B cell (primary cell): ENCODE measurements at regions of chr15 and their contacts with region 1.

Region 1: DNA sequence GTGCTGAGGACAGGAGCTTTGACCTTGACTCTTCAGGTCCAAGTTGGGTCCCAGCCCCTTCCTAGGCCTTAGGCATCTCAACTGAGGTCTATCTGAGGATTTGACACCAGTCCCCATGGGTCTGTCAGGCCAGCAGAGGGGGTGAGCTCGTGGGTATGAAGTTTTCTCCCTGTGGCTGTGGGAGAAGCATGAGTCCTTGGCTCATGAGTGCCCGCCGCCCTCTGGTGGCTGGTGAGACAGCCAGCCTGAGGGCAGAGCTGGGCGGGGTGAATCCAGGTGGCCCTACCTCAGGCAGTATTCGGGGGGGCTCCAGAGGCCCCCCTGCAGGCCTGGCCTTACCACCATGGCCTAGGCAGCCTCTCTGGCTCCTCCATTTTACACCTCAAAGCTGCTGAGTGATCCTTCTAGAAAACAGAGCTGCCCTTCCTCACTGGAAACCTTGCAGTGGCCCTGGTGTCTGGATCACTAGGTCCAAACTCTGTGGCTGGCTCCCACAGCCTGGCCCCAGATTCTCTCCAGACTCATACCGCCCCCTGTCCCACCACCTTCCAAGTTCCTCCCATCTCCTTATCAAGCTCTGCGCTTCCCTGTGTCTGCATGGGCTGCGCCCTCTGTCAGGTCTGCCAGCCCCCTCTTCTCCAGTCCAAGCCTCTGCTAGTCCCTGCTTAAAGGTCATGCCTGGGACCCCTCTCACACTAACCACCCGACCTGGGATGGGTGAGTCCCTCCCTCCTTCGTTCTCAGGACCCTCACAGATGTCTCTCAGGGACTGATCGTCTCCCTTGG is 16.1 kb downstream of the SH2D7 start:
- DNase-seq: peak; percentile 87
- ATAC-seq: peak; percentile 92
- H3K4me3 ChIP-seq: no peak overlapping the region
- H3K4me3 Mint-ChIP-seq: no peak overlapping the region
- H3K27ac ChIP-seq: no peak overlapping the region
- H3K27ac Mint-ChIP-seq: no peak overlapping the region
- H3K4me1 ChIP-seq: peaks cover 4 to 8% of the 10 kb centered on the region in 2 donors
- H3K4me1 Mint-ChIP-seq: peaks cover 4% of the 10 kb centered on the region
- H3K27me3 ChIP-seq: no peaks in the 10 kb centered on the region
- H3K27me3 Mint-ChIP-seq: no peaks in the 10 kb centered on the region
- CTCF ChIP-seq: peak; percentile 87

Region 2: DNA sequence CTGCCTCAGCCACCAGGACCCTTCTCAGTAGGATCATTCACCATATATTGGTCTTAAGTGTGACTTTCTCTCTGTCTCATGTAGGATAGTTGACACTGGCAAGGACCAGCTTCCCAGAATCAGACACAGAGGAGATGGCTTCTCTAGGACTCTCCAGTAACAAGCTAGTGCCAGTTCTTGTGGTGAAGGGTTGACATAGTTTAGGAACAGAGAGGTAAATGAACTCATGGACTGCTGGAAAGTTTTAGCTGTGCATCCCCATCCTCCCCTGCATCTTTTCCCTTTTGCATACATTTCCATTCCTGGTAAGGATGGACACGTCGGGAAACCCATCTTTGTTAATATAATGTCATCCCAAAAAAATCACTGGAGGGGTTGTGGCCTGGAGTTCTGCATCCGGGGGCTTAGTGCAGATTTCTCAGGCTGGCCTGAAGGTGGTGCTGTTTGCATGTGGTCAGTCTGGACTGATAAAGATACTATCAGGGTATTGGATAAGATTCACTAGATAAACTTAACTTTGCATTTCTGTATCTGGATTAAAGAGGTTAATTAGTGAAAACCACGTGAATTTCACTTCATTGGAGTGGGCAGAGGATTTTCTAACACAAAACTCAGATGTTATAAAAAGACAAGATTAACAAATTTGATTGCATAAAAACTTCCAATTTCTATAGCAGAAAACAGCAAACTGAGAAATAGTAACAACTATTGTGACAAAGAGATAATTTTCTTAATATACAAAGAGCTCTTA is 141.8 kb before region 1 on chr15:
- CTCF ChIA-PET with region 1: interaction called, 236 read pairs
- POLR2A ChIA-PET with region 1: no interaction called
- intact Hi-C with region 1: loop called (anchors 1 kb)
- DNase-seq: peak; percentile 62
- ATAC-seq: peak; percentile 68
- H3K4me3 ChIP-seq: no peak overlapping the region
- H3K4me3 Mint-ChIP-seq: no peak overlapping the region
- H3K27ac ChIP-seq: no peak overlapping the region
- H3K27ac Mint-ChIP-seq: no peak overlapping the region
- H3K4me1 ChIP-seq: no peaks in the 10 kb centered on the region
- H3K4me1 Mint-ChIP-seq: peaks cover 4% of the 10 kb centered on the region
- H3K27me3 ChIP-seq: no peaks in the 10 kb centered on the region
- H3K27me3 Mint-ChIP-seq: peaks cover 6% of the 10 kb centered on the region
- CTCF ChIP-seq: peak; percentile 84

Region 3: DNA sequence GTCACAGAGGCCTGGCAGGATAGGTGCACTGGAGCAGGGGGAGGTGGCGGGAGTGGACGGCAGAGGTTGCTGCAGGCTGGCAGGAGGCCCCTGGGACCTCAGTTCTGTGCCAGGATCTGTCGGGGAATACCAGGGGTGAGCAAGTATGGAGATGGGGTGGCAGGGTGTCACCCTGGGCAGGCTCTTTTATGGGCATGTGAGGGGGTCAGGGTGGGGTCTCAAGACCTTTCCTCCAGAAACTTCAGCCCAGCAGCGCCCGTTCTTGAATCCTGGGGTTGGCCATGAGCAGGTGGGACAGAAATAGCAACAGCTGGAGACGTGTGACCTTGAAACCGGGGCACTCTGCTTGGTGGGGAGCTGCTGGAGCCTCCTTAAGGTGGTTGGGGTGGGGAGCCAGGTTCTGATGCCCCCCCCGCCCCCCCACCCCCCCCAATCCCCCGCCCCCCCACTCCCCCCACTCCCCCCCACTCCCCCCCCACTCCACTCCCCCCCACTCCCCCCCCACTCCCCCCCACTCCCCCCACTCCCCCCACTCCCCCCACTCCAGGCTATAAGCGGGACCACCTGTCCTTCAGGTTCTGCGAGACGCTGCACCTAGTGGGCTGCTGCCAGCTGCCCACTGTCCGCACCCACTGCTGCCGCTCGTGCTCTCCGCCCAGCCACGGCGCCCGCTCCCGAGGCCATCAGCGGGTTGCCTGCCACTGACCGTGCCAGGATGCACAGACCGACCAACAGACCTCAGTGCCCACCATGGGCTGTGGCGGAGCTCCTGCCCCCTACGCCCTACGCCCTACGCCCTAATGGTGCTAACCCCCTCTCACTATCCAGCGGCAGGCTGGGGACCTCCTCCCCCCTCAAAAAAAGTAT is 115.9 kb before region 1 on chr15:
- CTCF ChIA-PET with region 1: interaction called, 99 read pairs
- POLR2A ChIA-PET with region 1: no interaction called
- intact Hi-C with region 1: no loop called
- DNase-seq: no peak
- ATAC-seq: no peak
- H3K4me3 ChIP-seq: no peak overlapping the region
- H3K4me3 Mint-ChIP-seq: no peak overlapping the region
- H3K27ac ChIP-seq: no peak overlapping the region
- H3K27ac Mint-ChIP-seq: peak overlapping the region; percentile 61
- H3K4me1 ChIP-seq: peaks cover 32 to 33% of the 10 kb centered on the region in 2 donors
- H3K4me1 Mint-ChIP-seq: peaks cover 41% of the 10 kb centered on the region
- H3K27me3 ChIP-seq: no peaks in the 10 kb centered on the region
- H3K27me3 Mint-ChIP-seq: no peaks in the 10 kb centered on the region
- CTCF ChIP-seq: no peak

Region 4: DNA sequence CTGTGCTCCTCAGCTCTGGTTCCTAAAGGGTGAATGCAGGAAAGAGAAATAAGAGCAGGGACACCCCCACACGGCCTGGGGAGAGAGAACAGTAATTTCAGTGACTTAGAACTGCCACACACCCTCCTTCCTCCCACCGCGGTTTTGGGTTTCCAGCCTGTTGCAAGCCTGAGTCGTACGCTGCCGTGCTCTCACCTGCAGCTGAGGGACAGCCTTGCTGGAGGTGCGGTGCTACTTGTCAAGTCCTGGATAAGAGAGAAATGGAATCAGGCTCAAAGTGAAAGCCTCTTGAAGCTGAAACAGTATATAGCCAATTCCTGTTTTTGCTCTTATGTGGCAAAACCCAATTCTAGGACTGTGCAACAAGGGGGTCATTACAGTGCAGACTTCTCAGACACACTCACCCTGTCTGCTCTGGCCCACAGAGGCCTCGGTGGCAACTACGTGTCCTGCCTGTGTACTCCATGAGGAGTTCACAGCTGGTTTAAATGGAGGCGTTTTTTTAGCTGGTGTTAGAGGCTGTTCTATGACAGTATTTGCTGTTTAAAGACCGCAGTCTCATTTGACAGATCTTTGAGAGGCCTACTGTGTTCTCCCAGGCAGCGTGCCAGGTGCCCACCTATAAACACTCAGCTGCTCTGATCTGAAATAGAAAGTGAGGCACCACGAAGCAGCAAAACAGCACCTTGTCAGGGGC is 73.8 kb before region 1 on chr15:
- CTCF ChIA-PET with region 1: interaction called, 17 read pairs
- POLR2A ChIA-PET with region 1: no interaction called
- intact Hi-C with region 1: no loop called
- DNase-seq: peak; percentile 51
- ATAC-seq: peak; percentile 74
- H3K4me3 ChIP-seq: no peak overlapping the region
- H3K4me3 Mint-ChIP-seq: peak overlapping the region; percentile 67
- H3K27ac ChIP-seq: peak overlapping the region; percentile 9 to 13
- H3K27ac Mint-ChIP-seq: peak overlapping the region; percentile 72
- H3K4me1 ChIP-seq: peaks cover 32 to 42% of the 10 kb centered on the region in 2 donors
- H3K4me1 Mint-ChIP-seq: peaks cover 57% of the 10 kb centered on the region
- H3K27me3 ChIP-seq: no peaks in the 10 kb centered on the region
- H3K27me3 Mint-ChIP-seq: no peaks in the 10 kb centered on the region
- CTCF ChIP-seq: no peak

Region 5: DNA sequence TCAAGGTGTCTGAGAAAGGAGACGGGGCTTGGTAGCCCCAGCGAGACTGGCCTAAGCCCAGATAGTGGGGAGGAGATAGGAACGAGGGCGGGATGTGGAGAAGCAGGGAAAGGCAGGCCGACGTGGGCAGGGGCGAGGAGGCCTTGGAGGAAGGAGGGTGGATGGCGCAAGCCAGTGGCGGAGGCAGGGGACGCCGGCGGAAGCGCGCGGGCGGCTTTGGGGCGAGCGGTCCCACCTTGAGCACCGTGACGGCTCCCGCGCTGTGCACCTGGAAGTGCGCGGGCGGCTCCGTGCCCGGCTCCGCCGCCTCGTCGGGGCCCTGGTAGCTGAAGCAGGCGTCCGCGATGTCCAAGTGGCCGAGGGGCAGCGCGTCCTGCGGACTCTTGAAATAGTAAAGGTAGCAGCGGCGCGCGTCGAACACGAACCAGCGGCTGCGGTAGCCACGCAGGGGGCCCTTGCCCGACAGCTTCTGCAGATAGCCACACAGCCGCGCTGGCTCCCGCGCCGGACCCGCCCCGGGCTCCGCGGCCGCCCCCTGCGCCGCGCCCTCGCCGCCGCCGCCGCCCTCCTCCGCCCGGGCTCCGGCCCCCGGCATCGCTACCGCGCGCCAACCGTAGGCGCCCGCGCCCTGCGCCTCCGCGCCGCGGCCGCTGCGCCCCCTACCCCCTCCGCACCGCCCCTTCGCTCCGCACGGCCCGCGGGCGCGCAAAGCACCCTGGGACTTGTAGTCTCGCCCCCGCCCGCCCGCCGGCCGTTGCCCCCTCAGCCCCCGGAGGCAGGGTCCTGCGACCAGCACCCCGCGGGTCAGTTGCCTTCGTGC is 31.2 kb before region 1 on chr15 and contains the start of gene TBC1D2B:
- CTCF ChIA-PET with region 1: interaction called, 9 read pairs
- POLR2A ChIA-PET with region 1: no interaction called
- intact Hi-C with region 1: loop called (anchors 2 kb)
- DNase-seq: peak; percentile 76
- ATAC-seq: peak; percentile 94
- H3K4me3 ChIP-seq: peak within 1 kb of the TSS; percentile 76 to 89 (median 79)
- H3K4me3 Mint-ChIP-seq: peak within 1 kb of the TSS; percentile 93
- H3K27ac ChIP-seq: peak within 1 kb of the TSS in 1 of 2 donors; percentile 1
- H3K27ac Mint-ChIP-seq: peak within 1 kb of the TSS; percentile 89
- H3K4me1 ChIP-seq: peaks cover 17 to 22% of the 10 kb centered on the region in 2 donors
- H3K4me1 Mint-ChIP-seq: peaks cover 26% of the 10 kb centered on the region
- H3K27me3 ChIP-seq: no peaks in the 10 kb centered on the region
- H3K27me3 Mint-ChIP-seq: no peaks in the 10 kb centered on the region
- CTCF ChIP-seq: peak; percentile 12
- total RNA-seq, gene TBC1D2B: 26.1 and 29.8 TPM in 2 replicates

Region 6: GRCh38 chr15:78120523-78120922 is 12.0 kb after region 1 on chr15:
- CTCF ChIA-PET with region 1: interaction called, 56 read pairs
- POLR2A ChIA-PET with region 1: no interaction called
- intact Hi-C with region 1: no loop called
- DNase-seq: no peak
- ATAC-seq: no peak
- H3K4me3 ChIP-seq: no peak overlapping the region
- H3K4me3 Mint-ChIP-seq: no peak overlapping the region
- H3K27ac ChIP-seq: no peak overlapping the region
- H3K27ac Mint-ChIP-seq: no peak overlapping the region
- H3K4me1 ChIP-seq: no peaks in the 10 kb centered on the region
- H3K4me1 Mint-ChIP-seq: no peaks in the 10 kb centered on the region
- H3K27me3 ChIP-seq: no peaks in the 10 kb centered on the region
- H3K27me3 Mint-ChIP-seq: no peaks in the 10 kb centered on the region
- CTCF ChIP-seq: no peak

Region 7: DNA sequence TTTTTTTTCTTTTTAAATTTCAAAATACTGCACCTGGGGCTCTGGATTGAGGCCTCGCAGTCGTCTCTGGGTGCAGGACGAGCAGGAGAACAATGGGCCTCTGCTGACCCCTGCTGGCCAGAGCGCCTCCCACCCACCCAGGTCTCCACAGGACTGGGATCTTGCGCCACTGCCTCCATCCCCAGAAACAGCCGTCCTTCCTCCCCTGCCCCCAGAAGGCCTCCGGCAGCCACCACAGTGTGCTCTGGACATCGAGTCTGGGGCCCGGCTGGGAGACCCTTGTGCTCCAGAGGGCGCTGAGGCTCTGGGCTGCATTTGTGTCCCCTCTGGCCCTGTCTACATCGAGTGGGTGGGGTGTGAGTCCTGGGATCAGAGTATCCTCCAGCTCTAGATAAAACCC is 132.5 kb after region 1 on chr15:
- CTCF ChIA-PET with region 1: interaction called, 195 read pairs
- POLR2A ChIA-PET with region 1: no interaction called
- intact Hi-C with region 1: loop called (anchors 1 kb)
- DNase-seq: peak; percentile 79
- ATAC-seq: peak; percentile 92
- H3K4me3 ChIP-seq: no peak overlapping the region
- H3K4me3 Mint-ChIP-seq: no peak overlapping the region
- H3K27ac ChIP-seq: no peak overlapping the region
- H3K27ac Mint-ChIP-seq: no peak overlapping the region
- H3K4me1 ChIP-seq: no peaks in the 10 kb centered on the region
- H3K4me1 Mint-ChIP-seq: no peaks in the 10 kb centered on the region
- H3K27me3 ChIP-seq: peaks cover 0 to 7% (median 0%) of the 10 kb centered on the region in 4 experiments
- H3K27me3 Mint-ChIP-seq: peaks cover 6% of the 10 kb centered on the region
- CTCF ChIP-seq: peak; percentile 87